ENCODE measurements at regions of chr9 and their contacts with region 1.

Region 1: GRCh38 chr9:133992780-133993634 is 883 bp upstream of the VAV2 start:
- DNase-seq: peak; percentile 51 to 87 (median 74)
- ATAC-seq: peak; percentile 86
- H3K4me3 ChIP-seq: peak overlapping the region; percentile 72 to 76
- H3K4me3 Mint-ChIP-seq: peak overlapping the region; percentile 82
- H3K27ac ChIP-seq: no peak overlapping the region
- H3K27ac Mint-ChIP-seq: no peak overlapping the region
- H3K4me1 ChIP-seq: peaks cover 15% of the 10 kb centered on the region
- H3K4me1 Mint-ChIP-seq: peaks cover 5% of the 10 kb centered on the region
- H3K27me3 ChIP-seq: peaks cover 0 to 9% of the 10 kb centered on the region in 2 experiments
- H3K27me3 Mint-ChIP-seq: peaks cover 8% of the 10 kb centered on the region
- CTCF ChIP-seq: no peak

Region 2: GRCh38 chr9:133604214-133604613 is 388.8 kb before region 1 on chr9:
- CTCF ChIA-PET with region 1: interaction called, 3 read pairs
- POLR2A ChIA-PET with region 1: no interaction called
- intact Hi-C with region 1: loop called in 1 of 2 experiments (anchors 5 kb)
- DNase-seq: peak in 8 of 9 experiments; percentile 27 to 75 (median 56)
- ATAC-seq: peak; percentile 85
- H3K4me3 ChIP-seq: no peak overlapping the region
- H3K4me3 Mint-ChIP-seq: no peak overlapping the region
- H3K27ac ChIP-seq: no peak overlapping the region
- H3K27ac Mint-ChIP-seq: peak overlapping the region; percentile 3
- H3K4me1 ChIP-seq: peaks cover 11% of the 10 kb centered on the region
- H3K4me1 Mint-ChIP-seq: peaks cover 10% of the 10 kb centered on the region
- H3K27me3 ChIP-seq: peaks cover 0 to 4% of the 10 kb centered on the region in 2 experiments
- H3K27me3 Mint-ChIP-seq: peaks cover 19% of the 10 kb centered on the region
- CTCF ChIP-seq: peak; percentile 52

Region 3: GRCh38 chr9:133787754-133788025 is 205.3 kb before region 1 on chr9:
- CTCF ChIA-PET with region 1: interaction called, 161 read pairs
- POLR2A ChIA-PET with region 1: interaction called, 7 read pairs
- intact Hi-C with region 1: loop called (anchors 1 kb)
- DNase-seq: peak in 1 of 9 experiments; percentile 3
- ATAC-seq: no peak
- H3K4me3 ChIP-seq: no peak overlapping the region
- H3K4me3 Mint-ChIP-seq: no peak overlapping the region
- H3K27ac ChIP-seq: no peak overlapping the region
- H3K27ac Mint-ChIP-seq: no peak overlapping the region
- H3K4me1 ChIP-seq: no peaks in the 10 kb centered on the region
- H3K4me1 Mint-ChIP-seq: peaks cover 2% of the 10 kb centered on the region
- H3K27me3 ChIP-seq: peaks cover 0 to 3% of the 10 kb centered on the region in 2 experiments
- H3K27me3 Mint-ChIP-seq: peaks cover 2% of the 10 kb centered on the region
- CTCF ChIP-seq: no peak

Region 4: DNA sequence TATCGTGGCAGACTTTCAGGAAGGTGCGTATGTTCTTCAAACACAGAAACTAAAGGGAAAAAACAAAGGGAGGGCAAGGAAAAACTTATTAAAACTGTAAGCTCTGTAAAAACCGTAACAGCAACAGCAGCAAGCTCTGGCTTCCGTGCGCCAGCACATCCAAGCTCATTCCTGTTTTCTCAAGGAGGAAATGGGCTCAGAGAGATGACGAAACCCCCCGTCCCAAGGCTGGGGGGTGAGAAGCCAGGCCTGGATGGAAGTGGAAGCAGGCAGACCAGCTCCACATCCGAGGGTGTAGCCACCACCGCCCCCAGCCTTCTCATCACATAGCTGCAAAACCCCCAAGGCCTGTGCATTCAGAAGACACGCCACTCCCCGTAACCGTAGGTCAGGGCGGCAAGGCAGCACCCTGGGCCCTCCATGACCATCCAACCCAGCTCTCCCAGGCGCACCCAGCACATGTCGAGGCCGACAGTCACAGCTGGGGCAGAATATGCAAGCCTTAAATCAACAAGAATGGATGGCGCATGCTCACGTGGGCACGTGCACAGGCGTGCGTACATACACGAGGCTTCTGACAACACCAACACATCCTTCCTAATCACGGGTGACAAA is 53.7 kb before region 1 on chr9:
- CTCF ChIA-PET with region 1: no interaction called
- POLR2A ChIA-PET with region 1: no interaction called
- intact Hi-C with region 1: no loop called
- DNase-seq: peak in 1 of 9 experiments; percentile 6
- ATAC-seq: no peak
- H3K4me3 ChIP-seq: no peak overlapping the region
- H3K4me3 Mint-ChIP-seq: no peak overlapping the region
- H3K27ac ChIP-seq: no peak overlapping the region
- H3K27ac Mint-ChIP-seq: no peak overlapping the region
- H3K4me1 ChIP-seq: no peaks in the 10 kb centered on the region
- H3K4me1 Mint-ChIP-seq: no peaks in the 10 kb centered on the region
- H3K27me3 ChIP-seq: no peaks in the 10 kb centered on the region
- H3K27me3 Mint-ChIP-seq: no peaks in the 10 kb centered on the region
- CTCF ChIP-seq: no peak

Region 5: DNA sequence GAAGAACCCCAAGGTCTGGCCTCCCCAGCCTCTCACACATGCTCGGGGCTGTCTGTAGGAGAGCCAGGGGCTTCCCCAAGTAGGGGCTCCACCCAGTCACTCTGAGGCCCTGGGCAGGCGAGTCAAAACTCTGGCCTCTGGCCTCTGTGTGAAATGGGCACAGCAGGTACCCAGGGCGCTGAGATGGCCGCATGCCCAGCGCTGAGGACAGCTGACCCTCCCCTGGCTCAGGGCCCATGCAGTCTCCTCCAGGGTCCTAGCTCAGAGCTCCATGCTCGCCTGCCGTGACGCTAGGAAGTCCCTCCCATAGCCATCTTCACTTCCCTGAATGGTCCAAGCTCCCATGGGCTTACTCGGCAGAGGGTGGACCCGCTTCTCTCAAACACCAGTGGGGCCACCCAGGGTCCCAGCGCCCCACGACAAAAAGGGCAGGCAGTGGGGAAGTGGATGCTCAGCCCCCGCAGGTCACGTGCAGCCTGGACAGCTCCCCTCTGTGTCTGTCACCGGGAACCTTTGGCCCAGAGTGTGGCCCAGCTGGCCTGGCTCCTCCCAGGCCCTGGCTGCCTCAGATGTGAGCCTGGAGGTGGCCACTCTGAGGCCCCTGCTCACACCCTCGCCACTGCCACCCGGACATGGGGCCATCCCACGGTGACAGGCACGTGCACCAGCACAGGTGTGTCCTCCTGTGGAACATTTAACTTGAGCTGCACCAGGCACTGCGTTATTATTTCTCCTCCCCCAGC is 11.3 kb after region 1 on chr9:
- CTCF ChIA-PET with region 1: interaction called, 22 read pairs
- POLR2A ChIA-PET with region 1: no interaction called
- intact Hi-C with region 1: no loop called
- DNase-seq: no peak
- ATAC-seq: no peak
- H3K4me3 ChIP-seq: no peak overlapping the region
- H3K4me3 Mint-ChIP-seq: no peak overlapping the region
- H3K27ac ChIP-seq: no peak overlapping the region
- H3K27ac Mint-ChIP-seq: no peak overlapping the region
- H3K4me1 ChIP-seq: no peaks in the 10 kb centered on the region
- H3K4me1 Mint-ChIP-seq: no peaks in the 10 kb centered on the region
- H3K27me3 ChIP-seq: peaks cover 0 to 2% of the 10 kb centered on the region in 2 experiments
- H3K27me3 Mint-ChIP-seq: peaks cover 4% of the 10 kb centered on the region
- CTCF ChIP-seq: no peak

Region 6: GRCh38 chr9:134135343-134136118 is 142.5 kb after region 1 on chr9 and contains the start of gene WDR5:
- CTCF ChIA-PET with region 1: no interaction called
- POLR2A ChIA-PET with region 1: no interaction called
- intact Hi-C with region 1: loop called in 1 of 2 experiments (anchors 2 kb)
- DNase-seq: peak; percentile 81 to 95 (median 90)
- ATAC-seq: peak; percentile 86
- H3K4me3 ChIP-seq: peak within 1 kb of the TSS; percentile 92 to 98
- H3K4me3 Mint-ChIP-seq: peak within 1 kb of the TSS; percentile 89
- H3K27ac ChIP-seq: peak within 1 kb of the TSS; percentile 77 to 90
- H3K27ac Mint-ChIP-seq: peak within 1 kb of the TSS; percentile 95
- H3K4me1 ChIP-seq: peaks cover 38% of the 10 kb centered on the region
- H3K4me1 Mint-ChIP-seq: peaks cover 43% of the 10 kb centered on the region
- H3K27me3 ChIP-seq: no peaks in the 10 kb centered on the region
- H3K27me3 Mint-ChIP-seq: no peaks in the 10 kb centered on the region
- CTCF ChIP-seq: no peak
- total RNA-seq, gene WDR5: 15.5 to 16.6 TPM